Transverse colon (tissue), 4 donors: ENCODE measurements at regions of chr17 and their contacts with region 1.

Region 1: DNA sequence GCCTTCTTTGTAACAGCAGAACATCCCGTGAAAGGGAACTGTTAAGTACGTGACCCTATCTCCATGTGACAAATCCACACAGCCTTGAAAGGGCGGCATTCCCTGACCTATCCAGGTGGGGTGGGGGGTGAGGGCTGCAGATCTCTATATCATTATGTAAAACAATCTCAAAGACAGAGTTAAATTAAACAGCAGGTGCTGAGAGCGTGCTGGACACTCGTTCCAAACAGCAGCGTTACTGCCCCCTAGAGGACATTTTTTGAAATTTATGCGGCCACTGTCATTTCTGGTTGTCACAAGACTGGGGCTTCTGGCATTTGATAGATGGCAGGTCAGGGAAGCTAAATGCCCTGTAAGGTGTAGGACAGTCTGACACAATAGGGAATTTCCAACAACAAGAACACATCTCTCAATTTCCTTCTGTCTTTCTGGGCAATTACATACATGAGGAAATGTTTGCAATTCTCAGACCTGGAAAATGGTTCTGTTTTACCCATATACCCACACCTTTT is 6.7 kb upstream of the SLC25A39 start:
- DNase-seq: peak; percentile 83
- H3K4me3 ChIP-seq: no peak overlapping the region
- H3K27ac ChIP-seq: no peak overlapping the region
- H3K4me1 ChIP-seq: peaks cover 0 to 19% (median 5%) of the 10 kb centered on the region in 4 donors
- H3K27me3 ChIP-seq: no peaks in the 10 kb centered on the region
- CTCF ChIP-seq: peak; percentile 75 to 89 (median 82)
- EP300 ChIP-seq: no peak
- POLR2A ChIP-seq: no peak

Region 2: DNA sequence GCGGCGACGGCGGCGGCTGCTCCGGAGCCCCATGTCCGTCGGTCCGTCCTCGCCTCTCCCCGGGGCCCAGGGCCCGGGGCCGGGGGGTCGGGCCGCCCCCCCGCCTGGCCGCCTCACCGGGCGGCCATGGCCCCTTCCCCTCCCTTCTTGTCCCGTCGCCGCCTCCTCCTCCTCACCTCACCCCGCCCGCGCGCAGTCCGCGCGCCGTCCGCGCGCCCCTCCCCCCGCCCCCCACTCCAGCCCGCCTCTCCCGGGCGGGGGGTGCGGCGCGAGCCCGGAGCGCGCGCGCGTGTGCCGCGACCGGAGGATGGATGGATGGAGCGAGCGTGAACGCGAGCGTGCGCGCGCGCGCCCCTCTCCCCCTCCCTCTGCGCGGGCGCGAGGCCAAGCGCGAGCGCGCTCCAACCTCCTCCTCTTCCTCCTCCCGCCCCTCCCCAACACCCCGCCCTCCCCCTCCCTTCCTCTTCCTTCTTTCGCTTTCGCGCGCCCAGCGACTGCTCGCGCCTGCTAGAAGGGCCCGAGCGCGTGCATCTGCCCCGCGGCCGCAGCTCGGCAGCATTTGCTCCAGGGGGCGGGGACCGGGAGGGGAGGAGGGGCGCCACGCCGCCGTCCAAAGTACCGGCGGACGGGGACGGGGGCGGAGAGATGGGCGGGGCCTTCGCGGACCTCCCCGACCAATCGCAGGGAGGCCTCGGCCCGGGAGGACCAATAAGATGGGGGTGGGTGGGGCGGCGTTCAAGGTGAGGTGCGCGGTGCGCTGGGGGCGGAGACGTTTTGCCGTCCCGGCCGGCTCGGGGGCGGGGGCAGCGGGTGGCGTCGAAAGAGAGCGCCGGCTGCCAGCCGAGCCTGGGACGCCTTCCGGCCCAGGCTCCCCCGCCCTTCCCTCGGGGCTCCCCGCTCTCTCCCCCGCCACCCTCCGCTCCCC is 131.5 kb before region 1 on chr17 and contains the start of gene ATXN7L3:
- in situ Hi-C with region 1: loop called in 1 of 4 experiments (anchors 5 kb)
- intact Hi-C with region 1: no loop called
- DNase-seq: peak; percentile 100
- H3K4me3 ChIP-seq: peak within 1 kb of the TSS; percentile 77 to 99 (median 88)
- H3K27ac ChIP-seq: peak within 1 kb of the TSS; percentile 94 to 100 (median 98)
- H3K4me1 ChIP-seq: peaks cover 10 to 42% (median 15%) of the 10 kb centered on the region in 4 donors
- H3K27me3 ChIP-seq: no peaks in the 10 kb centered on the region
- CTCF ChIP-seq: no peak
- EP300 ChIP-seq: no peak
- POLR2A ChIP-seq: no peak
- total RNA-seq, gene ATXN7L3: 44.1 to 77.4 (median 52.3) TPM

Region 3: DNA sequence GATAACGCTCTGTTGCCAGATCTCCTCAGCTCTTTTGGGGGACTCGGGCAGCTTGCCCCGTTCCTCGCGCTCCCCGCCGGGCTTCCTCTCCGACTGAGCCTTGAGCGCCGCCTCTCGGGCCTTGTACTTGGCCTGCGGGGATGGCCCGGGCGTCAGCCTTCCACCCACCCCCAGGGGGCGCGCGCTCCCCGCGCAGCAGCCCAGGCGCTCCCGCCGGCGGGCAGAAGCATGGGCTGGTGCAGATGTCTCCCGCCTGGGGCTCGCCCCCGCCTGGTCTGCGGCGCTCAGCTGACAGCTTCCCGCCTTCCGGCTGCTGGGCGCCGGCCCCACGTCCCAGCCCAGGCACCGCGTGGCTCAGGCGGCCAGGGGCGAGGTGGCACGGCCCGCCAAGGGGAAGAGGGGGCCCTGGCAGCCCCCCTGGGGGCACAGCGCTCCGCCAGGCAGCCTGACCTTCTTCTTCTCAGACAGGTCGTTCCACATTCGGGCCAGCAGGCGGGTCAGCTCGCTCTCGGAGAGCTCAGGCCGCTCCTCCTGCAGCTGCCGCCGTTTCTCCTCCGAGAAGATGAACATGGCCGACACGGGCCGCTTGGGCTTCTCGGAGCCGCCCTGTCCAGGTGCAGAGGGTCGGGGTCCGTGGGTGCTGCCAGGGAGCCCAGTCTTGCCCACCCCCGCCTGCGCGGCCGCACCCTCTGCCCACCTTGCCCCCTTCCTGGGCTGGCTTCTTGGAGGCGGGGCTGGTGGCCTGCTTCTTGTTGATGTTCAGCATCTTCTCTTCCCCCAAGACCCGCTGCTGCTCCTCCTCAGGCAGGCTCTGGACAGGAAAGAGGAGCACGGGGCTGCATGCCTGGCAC is 120.7 kb before region 1 on chr17:
- in situ Hi-C with region 1: loop called in 3 of 4 experiments (anchors 5 to 10 kb)
- intact Hi-C with region 1: loop called (anchors 2 kb)
- DNase-seq: peak; percentile 92
- H3K4me3 ChIP-seq: no peak overlapping the region
- H3K27ac ChIP-seq: peak overlapping the region; percentile 25 to 69 (median 59)
- H3K4me1 ChIP-seq: peaks cover 9 to 17% (median 13%) of the 10 kb centered on the region in 4 donors
- H3K27me3 ChIP-seq: no peaks in the 10 kb centered on the region
- CTCF ChIP-seq: peak; percentile 94 to 100 (median 99)
- EP300 ChIP-seq: no peak
- POLR2A ChIP-seq: no peak

Region 4: DNA sequence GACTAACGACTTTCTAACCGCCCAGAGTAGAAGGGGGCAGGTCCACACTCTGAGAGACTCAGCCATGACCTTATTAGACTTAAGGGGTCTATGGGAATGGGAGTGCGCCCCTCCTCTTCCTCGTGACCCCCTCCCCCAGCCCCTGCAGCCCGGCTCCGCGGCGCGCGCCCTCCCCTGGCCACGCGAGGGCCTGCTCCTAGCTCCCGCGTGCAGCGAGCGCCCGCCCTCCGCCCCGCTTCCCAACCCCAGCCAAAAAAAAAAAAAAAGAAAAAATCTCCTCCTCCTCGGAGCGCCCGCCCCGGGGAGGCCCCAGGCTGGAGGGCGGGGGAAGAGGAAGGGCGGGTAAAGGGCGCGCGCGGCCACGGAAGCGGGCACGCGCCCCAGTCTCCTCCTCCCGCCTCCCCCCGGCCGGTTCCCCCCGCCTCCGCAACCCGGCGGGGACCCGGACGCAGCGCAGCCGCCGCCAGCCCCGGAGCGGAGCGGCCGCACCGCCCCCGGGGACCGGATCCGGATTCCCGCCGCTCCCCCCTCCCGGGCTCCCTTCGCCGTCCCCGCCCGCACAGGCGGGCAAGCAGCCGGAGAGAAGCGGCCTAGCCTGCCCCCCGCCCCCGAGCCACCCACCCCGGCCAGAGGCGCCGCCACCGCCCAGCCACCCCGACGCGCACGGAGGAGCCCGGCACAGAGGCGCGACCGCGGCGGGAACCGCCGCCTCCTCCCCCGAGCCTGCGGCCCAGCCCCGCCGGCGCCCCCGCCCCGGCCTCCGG is 112.8 kb before region 1 on chr17:
- in situ Hi-C with region 1: loop called in 3 of 4 experiments (anchors 5 to 10 kb)
- intact Hi-C with region 1: no loop called
- DNase-seq: peak; percentile 92
- H3K4me3 ChIP-seq: peak overlapping the region; percentile 84 to 98 (median 98)
- H3K27ac ChIP-seq: peak overlapping the region; percentile 99 to 100 (median 100)
- H3K4me1 ChIP-seq: peaks cover 27 to 37% (median 31%) of the 10 kb centered on the region in 4 donors
- H3K27me3 ChIP-seq: no peaks in the 10 kb centered on the region
- CTCF ChIP-seq: peak; percentile 43 to 70 (median 62)
- EP300 ChIP-seq: no peak
- POLR2A ChIP-seq: no peak